HCT116 (cell line): ENCODE measurements at regions of chr6 and their contacts with region 1.

Region 1: GRCh38 chr6:69835414-69836179 is 30.8 kb upstream of the COL19A1 start:
- DNase-seq: peak; percentile 56
- ATAC-seq: peak; percentile 81
- H3K4me3 ChIP-seq: no peak overlapping the region
- H3K27ac ChIP-seq: no peak overlapping the region
- H3K4me1 ChIP-seq: no peaks in the 10 kb centered on the region
- H3K27me3 ChIP-seq: 0 out of 2 replicates have a peak, but pooled peaks cover 3% of the 10 kb centered on the region
- CTCF ChIP-seq: peak; percentile 30 to 80 (median 75); a peak in 5 of 6 replicates
- POLR2A ChIP-seq: no peak
- RAD21 ChIP-seq: peak; percentile 49

Region 2: GRCh38 chr6:70166088-70166958 is 330.7 kb after region 1 on chr6:
- CTCF ChIA-PET with region 1: interaction called, 3 read pairs
- POLR2A ChIA-PET with region 1: no interaction called
- RAD21 ChIA-PET with region 1: no interaction called
- intact Hi-C with region 1: loop called (anchors 10 kb)
- DNase-seq: peak; percentile 16
- ATAC-seq: peak; percentile 98
- H3K4me3 ChIP-seq: no peak overlapping the region
- H3K27ac ChIP-seq: no peak overlapping the region
- H3K4me1 ChIP-seq: no peaks in the 10 kb centered on the region
- H3K27me3 ChIP-seq: peaks cover 27% of the 10 kb centered on the region
- CTCF ChIP-seq: peak; percentile 26 to 75 (median 71); a peak in 5 of 6 replicates
- POLR2A ChIP-seq: no peak
- RAD21 ChIP-seq: peak; percentile 65